ENCODE measurements at regions of chr3 and their contacts with region 1.

Region 1: GRCh38 chr3:142418926-142419592 is 28.8 kb downstream of the XRN1 start:
- DNase-seq: peak; percentile 59
- H3K4me3 ChIP-seq: no peak overlapping the region
- H3K27ac ChIP-seq: peak overlapping the region; percentile 44
- H3K4me1 ChIP-seq: peaks cover 16% of the 10 kb centered on the region
- H3K27me3 ChIP-seq: no peaks in the 10 kb centered on the region
- CTCF ChIP-seq: no peak
- POLR2A ChIP-seq: no peak

Region 2: GRCh38 chr3:142224482-142225072 is 194.5 kb before region 1 on chr3:
- CTCF ChIA-PET with region 1: no interaction called
- POLR2A ChIA-PET with region 1: no interaction called
- dilution Hi-C with region 1: no loop called
- intact Hi-C with region 1: no loop called
- DNase-seq: no peak
- H3K4me3 ChIP-seq: peak overlapping the region; percentile 64 to 74 (median 72)
- H3K27ac ChIP-seq: peak overlapping the region; percentile 69
- H3K4me1 ChIP-seq: peaks cover 6% of the 10 kb centered on the region
- H3K27me3 ChIP-seq: no peaks in the 10 kb centered on the region
- CTCF ChIP-seq: no peak
- POLR2A ChIP-seq: no peak

Region 3: DNA sequence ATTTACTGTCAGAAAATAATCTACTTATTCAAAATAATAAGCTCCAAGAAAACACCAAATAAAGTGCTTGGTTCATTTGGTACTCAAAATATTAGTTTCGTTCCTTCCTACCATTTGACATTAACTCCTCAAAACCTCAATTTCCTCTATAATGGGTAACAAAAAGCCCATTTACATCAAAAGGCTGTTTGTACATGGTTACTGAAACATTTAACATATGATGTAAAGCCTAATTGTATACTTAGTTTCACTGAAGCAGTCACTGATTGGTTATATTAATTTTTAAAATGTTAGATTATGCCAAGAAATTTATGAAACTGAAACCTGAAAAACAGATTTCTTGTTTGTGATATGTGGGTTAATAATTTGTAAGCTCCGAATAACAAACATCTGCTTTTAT is 14.1 kb after region 1 on chr3:
- CTCF ChIA-PET with region 1: no interaction called
- POLR2A ChIA-PET with region 1: no interaction called
- dilution Hi-C with region 1: no loop called
- intact Hi-C with region 1: loop called (anchors 1 kb)
- DNase-seq: no peak
- H3K4me3 ChIP-seq: no peak overlapping the region
- H3K27ac ChIP-seq: no peak overlapping the region
- H3K4me1 ChIP-seq: peaks cover 5% of the 10 kb centered on the region
- H3K27me3 ChIP-seq: no peaks in the 10 kb centered on the region
- CTCF ChIP-seq: no peak
- POLR2A ChIP-seq: no peak

Region 4: DNA sequence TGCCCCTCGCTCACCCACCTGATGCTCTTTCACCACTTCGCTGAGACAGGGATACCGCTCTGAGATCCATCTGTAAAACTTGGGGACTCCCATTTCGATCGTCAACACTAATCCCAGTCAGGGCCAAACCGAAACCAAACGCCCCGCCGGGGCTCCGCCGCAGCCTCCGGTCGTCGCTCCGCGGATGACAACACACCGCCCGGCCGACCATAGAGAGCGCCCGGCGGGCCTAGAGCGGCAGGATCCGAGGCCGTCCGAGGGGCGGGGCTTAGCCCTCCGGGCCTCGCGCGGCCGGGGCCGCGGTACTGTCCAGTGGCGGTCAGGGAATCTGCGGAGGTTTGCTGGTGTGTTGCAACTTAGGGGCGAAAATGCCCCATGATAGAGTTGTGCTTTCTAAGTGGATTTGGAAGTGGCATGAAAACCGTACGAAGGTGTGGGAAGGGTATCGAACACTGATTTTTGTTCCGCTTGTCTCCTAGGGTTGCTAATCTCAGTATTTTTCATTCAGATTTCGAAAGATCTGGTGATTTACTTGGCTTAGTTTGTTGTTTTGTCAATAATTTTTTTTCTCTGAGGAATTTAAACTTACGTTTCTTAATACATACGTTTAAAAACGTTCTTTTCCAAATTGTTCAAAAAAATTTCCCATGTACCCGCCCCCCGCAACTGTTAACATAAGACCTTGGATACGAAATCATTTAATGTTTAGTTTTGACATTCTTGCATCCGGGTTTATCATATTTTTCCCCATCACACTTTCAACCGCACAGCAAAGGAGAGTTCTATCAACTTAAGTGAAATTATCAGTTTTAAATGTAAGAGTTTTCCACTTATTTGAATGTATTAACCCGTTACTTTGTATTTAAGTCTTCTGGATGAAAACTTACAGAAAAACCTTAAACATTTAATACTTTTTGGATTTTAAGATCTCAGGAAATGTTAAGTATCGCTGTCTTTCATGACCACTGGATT is 29.1 kb after region 1 on chr3 and contains the start of gene XRN1:
- CTCF ChIA-PET with region 1: no interaction called
- POLR2A ChIA-PET with region 1: no interaction called
- dilution Hi-C with region 1: no loop called
- intact Hi-C with region 1: loop called (anchors 1 kb)
- DNase-seq: peak; percentile 93
- H3K4me3 ChIP-seq: peak within 1 kb of the TSS; percentile 44 to 98 (median 83)
- H3K27ac ChIP-seq: peak within 1 kb of the TSS; percentile 84
- H3K4me1 ChIP-seq: peaks cover 20% of the 10 kb centered on the region
- H3K27me3 ChIP-seq: no peaks in the 10 kb centered on the region
- CTCF ChIP-seq: no peak
- POLR2A ChIP-seq: peak; percentile 95
- total RNA-seq, gene XRN1: 34.4 and 40.0 TPM in 2 replicates

Measured in endothelial cell of umbilical vein (primary cell).